Activated T-helper 1 cell treated with anti-CD3 and anti-CD28 coated beads, Interleukin-12 subunit alpha, Interleukin-12 subunit beta, Interleukin-2, Interleukin-4 antibody, amounts not matched to agents 30 ng/mL and 10 ng/mL and 1 ng/mL, durations not matched to agents 14 hours and 24 hours and 36 hours (primary cell): ENCODE measurements at regions of chr1 and their contacts with region 1.

Region 1: GRCh38 chr1:66242646-66243547 is 291.1 kb upstream of the SGIP1 start:
- DNase-seq: peak; percentile 64
- H3K4me3 Mint-ChIP-seq: no peak overlapping the region
- H3K27ac Mint-ChIP-seq: no peak overlapping the region
- H3K4me1 Mint-ChIP-seq: peaks cover 28% of the 10 kb centered on the region
- H3K27me3 Mint-ChIP-seq: peaks cover 6% of the 10 kb centered on the region

Region 2: DNA sequence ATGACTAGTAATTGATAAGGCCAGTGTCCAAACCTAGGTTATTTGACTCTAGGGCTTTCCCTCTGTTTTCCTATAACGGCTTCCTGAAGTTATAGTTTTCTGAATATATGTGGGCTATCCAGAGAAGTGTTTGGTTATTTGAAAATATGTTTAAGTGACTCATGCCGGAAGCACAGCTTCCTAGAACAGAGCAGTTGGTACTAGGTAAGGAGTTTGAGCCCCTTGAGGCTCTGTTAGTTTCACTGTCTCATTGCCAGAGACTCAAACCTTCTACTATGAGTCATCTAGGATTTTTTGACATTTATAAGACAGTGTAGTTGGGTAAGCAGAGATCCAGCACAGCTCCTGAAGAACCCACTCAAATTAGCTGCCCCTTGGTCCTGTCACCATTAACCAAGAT is 849.5 kb before region 1 on chr1:
- intact Hi-C with region 1: loop called (anchors 10 kb)
- DNase-seq: peak; percentile 30
- H3K4me3 Mint-ChIP-seq: peak overlapping the region; percentile 35
- H3K27ac Mint-ChIP-seq: peak overlapping the region; percentile 70
- H3K4me1 Mint-ChIP-seq: peaks cover 96% of the 10 kb centered on the region
- H3K27me3 Mint-ChIP-seq: no peaks in the 10 kb centered on the region

Region 3: DNA sequence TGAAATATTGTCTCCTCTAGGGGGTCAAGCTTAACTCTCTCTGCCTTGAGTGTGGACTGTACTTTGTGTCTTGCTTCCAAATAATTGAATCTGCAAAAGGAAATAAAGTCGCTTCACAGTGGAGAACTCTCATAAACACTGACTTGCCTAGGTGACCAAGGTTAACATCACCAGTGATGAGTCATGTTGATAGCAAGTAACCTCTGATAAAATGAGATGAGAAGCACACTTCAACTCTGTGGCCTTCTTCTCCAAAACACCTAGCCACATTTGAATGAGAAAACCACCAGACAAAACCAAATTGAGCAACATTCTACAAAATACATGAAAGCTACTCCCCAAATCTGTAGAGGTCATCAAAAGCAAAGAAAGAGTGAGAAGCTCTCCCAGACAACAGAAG is 412.6 kb before region 1 on chr1:
- intact Hi-C with region 1: loop called (anchors 2 kb)
- DNase-seq: peak; percentile 27
- H3K4me3 Mint-ChIP-seq: peak overlapping the region; percentile 31
- H3K27ac Mint-ChIP-seq: peak overlapping the region; percentile 79
- H3K4me1 Mint-ChIP-seq: peaks cover 36% of the 10 kb centered on the region
- H3K27me3 Mint-ChIP-seq: peaks cover 19% of the 10 kb centered on the region

Region 4: DNA sequence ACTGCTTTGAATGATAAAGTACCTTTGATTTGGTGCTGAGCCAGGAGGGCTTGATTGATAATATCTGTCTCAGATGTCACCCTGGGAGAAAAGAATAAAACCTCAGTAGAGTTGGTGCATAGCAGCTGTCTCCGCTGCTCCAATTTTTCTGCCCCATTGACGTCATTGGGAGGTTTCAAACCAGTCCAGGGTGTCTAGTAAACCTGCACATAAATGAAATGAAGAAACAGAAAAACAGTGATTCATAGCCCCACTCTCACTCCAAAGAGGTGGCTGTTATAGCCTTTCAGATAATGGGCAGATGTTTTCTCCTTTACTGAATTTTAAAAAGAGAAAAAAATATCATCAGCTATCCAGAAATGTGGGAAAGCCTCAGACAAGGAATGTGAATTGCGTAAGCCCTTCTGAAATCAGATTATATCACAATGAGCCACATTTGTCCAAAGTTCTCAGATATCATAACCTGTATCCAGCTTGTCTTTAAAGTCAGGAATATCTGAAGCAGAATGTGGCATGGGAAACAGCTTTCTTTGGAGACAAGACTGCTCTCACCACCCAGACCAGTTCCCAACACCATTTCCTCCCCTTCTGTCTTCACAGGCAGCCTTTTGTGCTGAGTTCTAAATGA is 60.2 kb before region 1 on chr1:
- intact Hi-C with region 1: loop called (anchors 1 kb)
- DNase-seq: peak; percentile 33
- H3K4me3 Mint-ChIP-seq: peak overlapping the region; percentile 51
- H3K27ac Mint-ChIP-seq: peak overlapping the region; percentile 18
- H3K4me1 Mint-ChIP-seq: peaks cover 51% of the 10 kb centered on the region
- H3K27me3 Mint-ChIP-seq: peaks cover 2% of the 10 kb centered on the region

Region 5: GRCh38 chr1:66331657-66332547 is 89.0 kb after region 1 on chr1:
- intact Hi-C with region 1: loop called (anchors 1 kb)
- DNase-seq: peak; percentile 35
- H3K4me3 Mint-ChIP-seq: peak overlapping the region; percentile 98
- H3K27ac Mint-ChIP-seq: peak overlapping the region; percentile 95
- H3K4me1 Mint-ChIP-seq: peaks cover 60% of the 10 kb centered on the region
- H3K27me3 Mint-ChIP-seq: no peaks in the 10 kb centered on the region

Region 6: GRCh38 chr1:66624412-66625060 is 381.6 kb after region 1 on chr1:
- intact Hi-C with region 1: loop called (anchors 10 kb)
- DNase-seq: no peak
- H3K4me3 Mint-ChIP-seq: no peak overlapping the region
- H3K27ac Mint-ChIP-seq: peak overlapping the region; percentile 66
- H3K4me1 Mint-ChIP-seq: peaks cover 5% of the 10 kb centered on the region
- H3K27me3 Mint-ChIP-seq: no peaks in the 10 kb centered on the region